ENCODE measurements at regions of chr18 and their contacts with region 1.

Region 1: DNA sequence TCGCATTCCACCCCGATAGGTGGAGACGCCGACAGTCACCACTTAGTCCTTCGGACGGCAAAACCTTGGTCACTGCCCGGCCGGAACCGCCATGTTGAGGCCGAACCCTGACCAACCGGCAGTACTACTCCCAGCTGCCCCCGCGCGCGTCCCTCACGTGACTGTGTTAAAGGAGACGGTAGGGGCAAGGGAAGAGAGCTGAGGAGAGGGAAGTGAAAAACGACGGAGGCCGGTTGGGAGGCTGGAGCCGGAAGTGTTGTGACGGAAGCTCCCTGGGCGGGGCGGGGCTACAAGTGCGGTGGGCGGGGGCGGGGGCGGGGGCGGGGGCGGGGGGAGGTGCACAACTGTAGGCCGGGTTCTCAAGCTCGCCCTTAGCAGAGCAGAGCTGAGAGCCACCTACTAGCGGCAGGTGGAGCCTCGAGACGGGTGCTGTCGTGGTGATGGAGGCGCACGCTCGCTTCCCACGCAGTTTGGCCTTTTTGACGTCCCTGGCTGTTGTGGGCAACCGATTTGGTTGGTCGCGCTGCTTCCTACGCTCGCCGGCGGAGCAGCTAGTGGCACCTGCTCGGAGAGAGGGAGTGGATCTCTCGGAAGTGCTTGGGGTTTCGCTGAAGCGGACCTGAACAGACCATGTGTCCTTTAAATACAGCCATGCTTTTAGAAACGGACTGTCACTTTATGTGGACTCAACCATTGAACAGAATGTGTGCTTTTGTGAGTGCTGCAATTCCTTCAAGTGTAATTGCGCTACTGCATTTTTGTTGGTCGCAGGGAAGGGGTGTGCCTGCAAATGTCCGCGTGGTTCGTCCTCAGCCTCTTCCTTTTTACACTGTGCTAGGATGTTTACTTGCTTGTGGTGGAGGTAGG is at the start of gene TRAPPC8:
- DNase-seq: peak; percentile 98 to 99
- ATAC-seq: peak; percentile 90
- total RNA-seq, gene TRAPPC8: 47.1 to 48.1 TPM

Region 2: GRCh38 chr18:32092422-32093101 is 149.3 kb after region 1 on chr18:
- intact Hi-C with region 1: loop called in 1 of 2 experiments (anchors 10 kb)
- DNase-seq: peak; percentile 99 to 100
- ATAC-seq: peak; percentile 92